ENCODE measurements at regions of chr3 and their contacts with region 1.

Region 1: GRCh38 chr3:58237238-58237940 is at the start of gene ABHD6:
- DNase-seq: peak; percentile 63 to 89 (median 71)
- H3K4me3 ChIP-seq: peak within 1 kb of the TSS; percentile 52 to 99 (median 93)
- H3K27ac ChIP-seq: peak within 1 kb of the TSS; percentile 80 to 97 (median 92)
- H3K27me3 ChIP-seq: no peaks in the 10 kb centered on the region
- CTCF ChIP-seq: peak; percentile 27 to 93 (median 74)
- total RNA-seq, gene ABHD6: 32.0 to 78.5 (median 50.8) TPM

Region 2: GRCh38 chr3:58177747-58178527 is 59.5 kb before region 1 on chr3:
- intact Hi-C with region 1: loop called (anchors 2 kb)
- DNase-seq: peak; percentile 82 to 93 (median 89)
- H3K4me3 ChIP-seq: peak overlapping the region; percentile 34 to 75 (median 59)
- H3K27ac ChIP-seq: peak overlapping the region in 5 of 59 donors; percentile 25 to 75 (median 59)
- H3K27me3 ChIP-seq: no peaks in the 10 kb centered on the region
- CTCF ChIP-seq: peak; percentile 79 to 98 (median 94)

Region 3: DNA sequence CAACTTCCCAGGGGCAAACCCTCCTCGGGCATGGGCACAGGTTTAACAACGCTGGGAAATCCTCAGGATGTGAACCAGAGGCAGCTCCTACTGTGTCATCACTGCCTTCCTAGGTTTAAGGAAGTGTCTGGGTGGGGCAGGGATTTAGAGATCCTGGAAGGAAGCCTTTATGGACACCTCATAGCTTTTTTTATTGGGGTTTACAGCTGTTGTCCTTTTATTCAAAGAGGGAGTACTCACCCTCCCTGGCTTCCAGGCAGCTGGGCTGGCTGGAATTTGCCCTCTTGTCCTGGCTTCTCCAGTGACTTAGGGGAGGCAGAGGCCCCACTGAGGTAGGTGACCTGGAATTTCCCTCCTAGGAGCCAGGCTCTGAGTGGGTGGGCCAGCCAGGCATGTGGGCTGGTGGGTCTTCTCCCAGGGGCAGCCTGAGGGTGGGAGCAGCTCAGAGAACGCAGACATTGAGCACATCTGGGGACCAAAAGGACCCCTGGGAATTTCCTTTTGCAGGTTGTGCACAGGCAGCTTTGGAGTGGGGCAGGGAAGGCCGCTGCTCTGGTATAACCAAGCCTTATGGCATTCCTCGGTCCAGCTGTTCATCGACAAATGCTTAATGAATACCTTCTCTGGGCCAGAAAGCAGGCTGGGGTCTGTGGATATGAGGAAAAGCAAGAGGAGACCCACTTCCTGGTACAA is 442.7 kb after region 1 on chr3:
- intact Hi-C with region 1: no loop called
- DNase-seq: no peak
- H3K4me3 ChIP-seq: no peak overlapping the region
- H3K27ac ChIP-seq: no peak overlapping the region
- H3K27me3 ChIP-seq: peaks cover 0 to 5% (median 0%) of the 10 kb centered on the region in 45 donors
- CTCF ChIP-seq: no peak

Measured in dorsolateral prefrontal cortex (tissue), 120 donors.